OCI-LY7 (cell line): ENCODE measurements at regions of chr1 and their contacts with region 1.

Region 1: GRCh38 chr1:171313835-171314320 is at the start of gene FMO4:
- DNase-seq: peak; percentile 98
- H3K4me3 ChIP-seq: peak within 1 kb of the TSS; percentile 64
- H3K27ac ChIP-seq: peak within 1 kb of the TSS; percentile 52
- H3K4me1 ChIP-seq: peaks cover 16% of the 10 kb centered on the region
- CTCF ChIP-seq: peak; percentile 99
- total RNA-seq, gene FMO4: 3.9 and 4.0 TPM in 2 replicates

Region 2: GRCh38 chr1:170531758-170532657 is 781.9 kb before region 1 on chr1 and contains the start of gene GORAB:
- CTCF ChIA-PET with region 1: no interaction called
- POLR2A ChIA-PET with region 1: no interaction called
- intact Hi-C with region 1: loop called (anchors 5 kb)
- DNase-seq: peak; percentile 90
- H3K4me3 ChIP-seq: peak within 1 kb of the TSS; percentile 97
- H3K27ac ChIP-seq: peak within 1 kb of the TSS; percentile 68
- H3K4me1 ChIP-seq: peaks cover 16% of the 10 kb centered on the region
- CTCF ChIP-seq: no peak
- total RNA-seq, gene GORAB: 11.5 and 19.8 TPM in 2 replicates

Region 3: GRCh38 chr1:170967042-170967910 is 346.6 kb before region 1 on chr1:
- CTCF ChIA-PET with region 1: interaction called, 11 read pairs
- POLR2A ChIA-PET with region 1: no interaction called
- intact Hi-C with region 1: loop called (anchors 1 kb)
- DNase-seq: peak; percentile 49
- H3K4me3 ChIP-seq: no peak overlapping the region
- H3K27ac ChIP-seq: no peak overlapping the region
- H3K4me1 ChIP-seq: no peaks in the 10 kb centered on the region
- CTCF ChIP-seq: peak; percentile 85

Region 4: GRCh38 chr1:171188388-171189266 is 125.3 kb before region 1 on chr1:
- CTCF ChIA-PET with region 1: interaction called, 3 read pairs
- POLR2A ChIA-PET with region 1: interaction called, 3 read pairs
- intact Hi-C with region 1: loop called (anchors 1 kb)
- DNase-seq: peak; percentile 65
- H3K4me3 ChIP-seq: no peak overlapping the region
- H3K27ac ChIP-seq: no peak overlapping the region
- H3K4me1 ChIP-seq: no peaks in the 10 kb centered on the region
- CTCF ChIP-seq: peak; percentile 96

Region 5: GRCh38 chr1:171245458-171246064 is 68.3 kb before region 1 on chr1:
- CTCF ChIA-PET with region 1: interaction called, 32 read pairs
- POLR2A ChIA-PET with region 1: interaction called, 28 read pairs
- intact Hi-C with region 1: loop called (anchors 1 kb)
- DNase-seq: peak; percentile 62
- H3K4me3 ChIP-seq: no peak overlapping the region
- H3K27ac ChIP-seq: no peak overlapping the region
- H3K4me1 ChIP-seq: peaks cover 17% of the 10 kb centered on the region
- CTCF ChIP-seq: peak; percentile 95

Region 6: DNA sequence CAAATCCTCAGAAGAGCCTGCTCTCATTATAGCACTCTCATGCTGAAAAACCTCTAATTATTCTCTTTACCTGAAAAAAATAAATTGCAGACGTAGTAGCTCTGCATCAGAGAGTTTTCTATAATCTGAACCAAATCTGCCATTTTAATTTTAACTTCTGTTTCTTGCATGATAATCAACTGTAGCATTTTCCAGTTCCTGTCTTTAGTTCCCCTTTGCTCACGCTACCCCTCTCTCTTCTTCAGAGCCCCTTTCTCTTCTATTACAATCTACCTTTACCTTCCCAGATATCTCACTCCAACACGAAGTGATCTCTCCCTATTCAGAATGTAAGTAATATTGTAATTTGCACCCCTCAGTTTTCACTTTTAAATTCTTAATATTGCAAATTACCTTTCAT is 34.2 kb before region 1 on chr1:
- CTCF ChIA-PET with region 1: interaction called, 5 read pairs
- POLR2A ChIA-PET with region 1: interaction called, 11 read pairs
- intact Hi-C with region 1: no loop called
- DNase-seq: peak; percentile 62
- H3K4me3 ChIP-seq: peak overlapping the region; percentile 22
- H3K27ac ChIP-seq: peak overlapping the region; percentile 53
- H3K4me1 ChIP-seq: peaks cover 54% of the 10 kb centered on the region
- CTCF ChIP-seq: no peak